Ascending aorta (tissue), 2 donors: ENCODE measurements at regions of chr18 and their contacts with region 1.

Region 1: DNA sequence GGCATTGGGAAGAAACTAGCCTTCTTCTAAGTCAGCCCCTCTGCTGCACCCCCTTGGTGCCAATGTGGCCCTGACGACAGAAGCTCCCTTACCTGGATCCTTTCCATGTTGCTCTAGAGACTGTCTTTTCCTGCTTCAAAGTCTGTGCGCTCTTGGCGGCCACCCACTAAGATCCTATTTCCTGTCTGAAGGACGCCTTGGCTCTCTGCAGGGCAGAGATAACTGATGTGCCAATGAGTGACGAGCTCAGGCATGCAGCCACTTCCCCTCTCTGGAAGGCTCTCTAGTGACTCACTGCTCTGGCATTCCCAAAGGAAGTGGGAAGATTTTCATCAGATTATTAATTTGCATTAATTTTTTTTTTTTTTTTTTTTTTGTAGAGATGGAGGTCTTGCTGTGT is 273.5 kb downstream of the CDH20 start:
- DNase-seq: peak in 1 of 2 donors; percentile 80
- H3K4me3 ChIP-seq: peak overlapping the region in 1 of 2 donors; percentile 55
- H3K27ac ChIP-seq: peak overlapping the region; percentile 45 to 75
- H3K4me1 ChIP-seq: peaks cover 0 to 6% of the 10 kb centered on the region in 2 donors
- H3K27me3 ChIP-seq: no peaks in the 10 kb centered on the region
- CTCF ChIP-seq: no peak

Region 2: DNA sequence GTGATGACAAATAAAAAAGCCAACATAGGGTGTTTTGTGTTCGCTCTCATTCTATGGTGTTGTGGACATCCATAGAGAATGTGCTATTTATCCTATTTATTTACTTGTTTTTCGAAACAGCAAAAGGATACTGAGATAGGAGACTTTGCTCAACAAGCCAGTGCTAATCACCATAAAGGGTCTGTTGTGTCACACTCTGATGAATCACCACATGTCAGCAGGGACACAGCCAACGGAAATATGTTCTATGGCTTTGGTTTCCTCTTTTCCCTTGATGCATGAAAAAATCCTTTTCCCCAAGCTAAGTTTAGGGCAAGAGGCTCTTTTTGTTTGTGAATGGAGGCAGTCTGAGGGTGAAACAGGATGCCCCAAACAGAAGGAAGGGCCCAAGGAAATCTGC is 131.7 kb after region 1 on chr18:
- intact Hi-C with region 1: loop called (anchors 5 kb)
- DNase-seq: peak in 1 of 2 donors; percentile 79
- H3K4me3 ChIP-seq: no peak overlapping the region
- H3K27ac ChIP-seq: peak overlapping the region; percentile 76 to 89
- H3K4me1 ChIP-seq: peaks cover 15 to 36% of the 10 kb centered on the region in 2 donors
- H3K27me3 ChIP-seq: no peaks in the 10 kb centered on the region
- CTCF ChIP-seq: no peak